Activated CD8-positive, alpha-beta T cell treated with anti-CD3 and anti-CD28 coated beads, Interleukin-2, amount 10 ng/mL, durations not matched to agents 7 days and 5 days (primary cell): ENCODE measurements at regions of chr17 and their contacts with region 1.

Region 1: GRCh38 chr17:44218344-44219107 is 949 bp downstream of the UBTF start:
- DNase-seq: peak; percentile 90
- ATAC-seq: peak; percentile 60
- H3K4me3 Mint-ChIP-seq: peak overlapping the region; percentile 97
- H3K27ac Mint-ChIP-seq: peak overlapping the region; percentile 85
- H3K4me1 Mint-ChIP-seq: peaks cover 46% of the 10 kb centered on the region
- H3K27me3 Mint-ChIP-seq: no peaks in the 10 kb centered on the region

Region 2: DNA sequence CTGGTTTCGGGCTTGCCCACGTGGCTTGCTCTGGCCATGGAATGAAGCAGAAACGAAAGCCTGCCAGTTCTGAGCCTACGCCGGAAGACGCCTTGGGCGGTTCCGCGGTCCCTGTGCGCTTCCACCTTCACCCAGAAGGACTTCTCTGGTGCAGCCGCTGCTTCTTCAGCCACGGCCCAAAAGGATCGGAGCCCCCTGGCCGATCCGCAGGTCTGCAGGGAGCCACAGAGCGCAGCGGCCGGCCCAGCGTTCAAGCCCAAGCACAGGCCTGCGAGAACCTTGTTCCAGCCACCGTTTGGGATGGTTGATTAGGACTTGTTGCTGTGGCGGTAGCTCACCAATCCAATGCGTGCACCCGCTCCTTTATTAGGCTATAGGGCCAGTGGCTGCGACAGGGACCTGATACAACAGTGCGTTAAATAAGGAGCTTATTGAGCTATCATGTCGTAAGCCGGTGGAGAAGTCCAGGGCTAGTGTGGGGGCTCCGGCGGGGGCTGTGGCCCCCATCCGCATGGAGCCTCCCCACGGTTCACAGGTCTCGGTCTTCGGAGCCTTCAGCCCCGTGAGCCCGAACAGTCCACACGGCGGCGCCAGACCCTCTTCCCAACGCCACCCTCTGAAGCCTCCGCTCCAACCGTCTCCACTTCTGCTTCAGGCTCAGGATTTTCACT is 301.0 kb before region 1 on chr17:
- CTCF ChIA-PET with region 1: no interaction called
- POLR2A ChIA-PET with region 1: no interaction called
- DNase-seq: peak; percentile 64
- ATAC-seq: peak; percentile 85
- H3K4me3 Mint-ChIP-seq: peak overlapping the region; percentile 73
- H3K27ac Mint-ChIP-seq: peak overlapping the region; percentile 80
- H3K4me1 Mint-ChIP-seq: peaks cover 18% of the 10 kb centered on the region
- H3K27me3 Mint-ChIP-seq: peaks cover 2% of the 10 kb centered on the region

Region 3: DNA sequence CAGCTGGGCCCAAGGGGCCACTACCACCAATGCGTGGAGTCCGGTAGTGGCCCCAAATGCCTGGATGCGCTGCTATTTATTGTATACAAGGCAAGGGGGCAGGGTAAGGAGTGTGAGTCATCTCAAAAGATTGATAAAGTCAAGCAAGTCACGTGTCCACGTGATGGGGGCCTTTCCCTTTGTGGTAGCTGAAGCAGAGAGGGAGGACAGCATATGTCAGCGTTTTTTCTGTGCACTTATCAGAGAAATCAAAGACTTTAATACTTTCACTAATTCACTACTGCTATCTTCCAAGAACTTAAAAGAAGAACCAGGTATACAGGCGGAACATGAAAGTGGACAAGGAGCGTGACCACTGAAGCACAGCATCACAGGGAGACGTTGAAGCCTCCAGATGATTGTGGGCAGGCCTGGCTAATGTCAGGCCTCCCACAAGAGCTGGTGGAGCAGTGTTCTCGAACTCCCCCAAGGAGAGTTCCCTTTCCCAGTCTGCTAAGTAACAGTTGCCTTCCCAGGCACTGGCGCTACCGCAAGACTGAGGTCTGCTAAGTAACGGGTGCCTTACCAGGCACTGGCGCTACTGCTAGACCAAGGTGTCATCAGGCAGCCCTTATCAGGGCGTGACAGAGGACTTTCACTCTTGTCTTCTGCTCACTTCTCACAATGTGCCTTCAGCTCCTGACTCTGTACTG is 58.9 kb before region 1 on chr17:
- CTCF ChIA-PET with region 1: no interaction called
- POLR2A ChIA-PET with region 1: no interaction called
- DNase-seq: no peak
- ATAC-seq: no peak
- H3K4me3 Mint-ChIP-seq: no peak overlapping the region
- H3K27ac Mint-ChIP-seq: no peak overlapping the region
- H3K4me1 Mint-ChIP-seq: peaks cover 5% of the 10 kb centered on the region
- H3K27me3 Mint-ChIP-seq: no peaks in the 10 kb centered on the region

Region 4: DNA sequence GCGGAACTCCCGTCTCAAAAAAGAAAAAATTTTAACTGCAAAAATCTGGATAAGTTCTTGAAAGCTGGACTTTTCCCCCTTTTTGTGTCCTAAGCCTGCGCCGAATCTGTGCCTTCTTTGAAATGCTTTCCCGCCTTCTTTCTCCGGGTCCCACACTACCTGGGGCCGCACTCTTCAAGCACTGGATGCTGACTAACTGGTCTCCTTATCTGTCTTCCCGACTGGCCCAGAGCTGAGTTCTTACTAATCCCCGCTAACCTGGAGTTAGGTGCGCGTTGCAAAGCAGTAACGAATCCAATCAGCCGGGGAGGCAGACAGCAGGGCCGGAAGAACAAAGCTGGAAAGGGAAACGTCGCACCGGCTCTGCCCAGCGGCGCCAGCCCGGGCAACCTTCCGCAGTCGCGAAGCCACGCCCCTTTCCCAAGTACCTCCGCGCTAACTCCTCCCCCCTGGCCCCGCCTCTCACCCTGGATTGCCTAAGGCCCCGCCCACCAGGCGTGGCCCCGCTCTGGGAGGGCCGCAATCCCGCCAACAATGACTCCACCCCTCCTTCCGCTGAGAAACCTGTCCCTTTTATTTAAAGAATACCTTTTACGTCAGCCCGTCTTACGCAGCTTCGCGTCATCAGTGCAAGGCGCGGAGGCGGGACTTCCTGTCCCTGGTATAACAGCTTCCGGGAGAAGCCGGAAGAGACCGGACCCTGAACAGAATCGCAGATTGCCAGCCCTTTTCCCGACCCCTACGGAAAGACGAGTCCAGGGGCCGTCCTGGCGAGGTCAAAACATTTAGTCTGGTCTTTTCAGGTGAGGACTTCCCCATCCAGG is 32.0 kb before region 1 on chr17 and contains the start of gene TMUB2:
- CTCF ChIA-PET with region 1: interaction called, 6 read pairs
- POLR2A ChIA-PET with region 1: interaction called, 26 read pairs
- DNase-seq: peak; percentile 100
- ATAC-seq: peak; percentile 91
- H3K4me3 Mint-ChIP-seq: peak within 1 kb of the TSS; percentile 97
- H3K27ac Mint-ChIP-seq: peak within 1 kb of the TSS; percentile 100
- H3K4me1 Mint-ChIP-seq: peaks cover 44% of the 10 kb centered on the region
- H3K27me3 Mint-ChIP-seq: no peaks in the 10 kb centered on the region
- total RNA-seq, gene TMUB2: 26.7 to 27.9 TPM

Region 5: DNA sequence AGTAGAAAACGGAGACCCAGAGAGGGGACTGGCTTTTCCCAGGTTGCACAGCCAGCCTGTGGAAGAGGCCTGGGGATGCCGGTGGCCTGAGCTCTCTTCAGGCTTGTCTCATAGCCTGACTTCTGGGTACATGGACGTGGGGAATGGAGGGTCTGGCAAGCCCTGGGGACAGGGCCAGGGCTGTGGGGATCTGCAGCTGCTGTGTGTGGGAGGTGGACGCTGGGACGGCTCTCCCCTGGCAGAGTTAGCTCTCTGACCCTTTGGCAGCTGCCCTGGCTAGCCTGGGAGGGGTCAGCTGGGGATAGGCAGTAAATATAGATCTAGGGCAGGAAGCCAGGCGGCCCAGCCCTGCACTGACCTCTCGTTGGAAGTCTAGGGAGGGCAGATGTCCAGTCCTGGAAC is 28.9 kb after region 1 on chr17:
- CTCF ChIA-PET with region 1: interaction called, 10 read pairs
- POLR2A ChIA-PET with region 1: interaction called, 57 read pairs
- DNase-seq: no peak
- ATAC-seq: no peak
- H3K4me3 Mint-ChIP-seq: no peak overlapping the region
- H3K27ac Mint-ChIP-seq: peak overlapping the region; percentile 86
- H3K4me1 Mint-ChIP-seq: peaks cover 48% of the 10 kb centered on the region
- H3K27me3 Mint-ChIP-seq: no peaks in the 10 kb centered on the region

Region 6: GRCh38 chr17:44324571-44325275 is 106.2 kb after region 1 on chr17 and contains the start of gene SLC25A39:
- CTCF ChIA-PET with region 1: interaction called, 37 read pairs
- POLR2A ChIA-PET with region 1: interaction called, 59 read pairs
- DNase-seq: peak; percentile 94
- ATAC-seq: peak; percentile 84
- H3K4me3 Mint-ChIP-seq: peak within 1 kb of the TSS; percentile 89
- H3K27ac Mint-ChIP-seq: peak within 1 kb of the TSS; percentile 89
- H3K4me1 Mint-ChIP-seq: peaks cover 26% of the 10 kb centered on the region
- H3K27me3 Mint-ChIP-seq: no peaks in the 10 kb centered on the region
- total RNA-seq, gene SLC25A39: 140 to 141 TPM

Region 7: GRCh38 chr17:44344939-44345453 is 126.5 kb after region 1 on chr17 and contains the start of gene GRN:
- CTCF ChIA-PET with region 1: interaction called, 68 read pairs
- POLR2A ChIA-PET with region 1: interaction called, 3 read pairs
- DNase-seq: peak; percentile 91
- ATAC-seq: peak; percentile 99
- H3K4me3 Mint-ChIP-seq: peak within 1 kb of the TSS; percentile 88
- H3K27ac Mint-ChIP-seq: peak within 1 kb of the TSS; percentile 75
- H3K4me1 Mint-ChIP-seq: peaks cover 30% of the 10 kb centered on the region
- H3K27me3 Mint-ChIP-seq: peaks cover 20% of the 10 kb centered on the region
- total RNA-seq, gene GRN: 45.6 to 46.7 TPM